RWPE1 (cell line): ENCODE measurements at regions of chr1 and their contacts with region 1.

Region 1: DNA sequence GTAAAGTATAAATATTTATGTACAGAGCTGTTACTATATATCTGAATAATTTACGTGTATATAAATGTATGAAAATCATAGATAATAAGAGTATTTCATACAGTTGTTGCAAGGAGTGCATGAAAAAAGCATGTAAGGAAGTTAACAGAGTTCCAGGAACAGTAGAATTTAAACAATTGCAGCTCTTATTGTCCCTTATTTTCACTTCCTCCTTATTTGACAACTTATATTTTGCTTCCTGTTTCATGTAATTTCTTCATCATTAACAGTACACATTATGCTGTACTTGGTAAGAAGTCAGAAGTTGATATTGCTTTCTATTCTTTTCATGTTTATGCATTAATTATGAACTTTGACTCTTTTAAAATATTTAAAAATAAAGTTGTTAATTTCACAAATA is 681.5 kb downstream of the LRRIQ3 start:
- DNase-seq: no peak
- H3K27ac ChIP-seq: no peak overlapping the region
- CTCF ChIP-seq: no peak

Region 2: GRCh38 chr1:73310797-73311381 is 205.6 kb before region 1 on chr1:
- CTCF ChIA-PET with region 1: no interaction called
- POLR2A ChIA-PET with region 1: no interaction called
- DNase-seq: no peak
- H3K27ac ChIP-seq: no peak overlapping the region
- CTCF ChIP-seq: no peak

Region 3: GRCh38 chr1:73411479-73411878 is 105.0 kb before region 1 on chr1:
- CTCF ChIA-PET with region 1: no interaction called
- POLR2A ChIA-PET with region 1: no interaction called
- DNase-seq: no peak
- H3K27ac ChIP-seq: no peak overlapping the region
- CTCF ChIP-seq: no peak

Region 4: DNA sequence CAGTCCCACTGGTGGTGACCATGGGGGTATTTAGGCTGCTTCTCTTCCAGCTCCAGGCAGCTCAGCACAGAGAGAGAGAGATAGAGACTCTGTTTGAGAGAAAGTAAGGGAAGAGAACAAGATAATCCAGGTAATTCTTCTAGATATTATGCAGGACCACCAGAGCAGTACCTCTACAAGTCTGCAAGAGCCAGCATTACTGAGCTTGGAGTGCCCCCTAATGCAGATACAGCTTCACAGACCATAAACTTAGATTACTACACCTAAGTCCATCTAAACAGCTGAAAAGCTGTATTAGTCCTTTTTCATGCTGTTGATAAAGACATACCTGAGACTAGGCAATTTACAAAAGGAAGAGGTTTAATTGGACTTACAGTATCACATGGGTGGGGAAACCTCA is 111.3 kb after region 1 on chr1:
- CTCF ChIA-PET with region 1: interaction called, 10 read pairs
- POLR2A ChIA-PET with region 1: no interaction called
- DNase-seq: no peak
- H3K27ac ChIP-seq: no peak overlapping the region
- CTCF ChIP-seq: no peak